ENCODE measurements at regions of chr18 and their contacts with region 1.

Region 1: DNA sequence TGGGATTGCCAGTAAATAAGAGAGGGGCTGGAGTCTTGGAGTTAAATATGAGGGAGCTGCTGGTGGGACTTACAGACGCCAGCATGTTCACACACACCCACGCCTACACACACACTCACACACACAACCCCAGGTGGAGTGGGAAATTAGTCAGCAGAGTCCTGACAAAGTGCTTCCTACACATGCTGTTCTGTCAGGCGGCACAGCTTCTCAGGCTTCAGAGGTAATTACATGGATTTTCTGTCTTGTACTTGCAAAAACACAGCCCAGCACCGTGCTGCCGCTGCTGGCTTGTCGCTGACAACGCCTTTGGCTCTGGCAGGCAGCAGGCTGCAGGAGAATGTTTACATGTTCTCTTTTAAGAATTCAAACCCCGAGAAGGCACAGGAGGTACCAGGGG is 1186.3 kb upstream of the CELF4 start:
- DNase-seq: no peak
- ATAC-seq: no peak
- H3K4me3 ChIP-seq: no peak overlapping the region
- H3K27ac ChIP-seq: no peak overlapping the region
- H3K4me1 ChIP-seq: no peaks in the 10 kb centered on the region
- H3K27me3 ChIP-seq: no peaks in the 10 kb centered on the region
- CTCF ChIP-seq: no peak
- EP300 ChIP-seq: no peak
- POLR2A ChIP-seq: no peak
- RAD21 ChIP-seq: no peak

Region 2: GRCh38 chr18:38534073-38534472 is 217.8 kb before region 1 on chr18:
- CTCF ChIA-PET with region 1: no interaction called
- POLR2A ChIA-PET with region 1: no interaction called
- in situ Hi-C with region 1: no loop called
- intact Hi-C with region 1: no loop called
- DNase-seq: no peak
- ATAC-seq: no peak
- H3K4me3 ChIP-seq: no peak overlapping the region
- H3K27ac ChIP-seq: no peak overlapping the region
- H3K4me1 ChIP-seq: no peaks in the 10 kb centered on the region
- H3K27me3 ChIP-seq: no peaks in the 10 kb centered on the region
- CTCF ChIP-seq: no peak
- EP300 ChIP-seq: no peak
- POLR2A ChIP-seq: no peak
- RAD21 ChIP-seq: no peak

Region 3: GRCh38 chr18:38790303-38790702 is 38.4 kb after region 1 on chr18:
- CTCF ChIA-PET with region 1: no interaction called
- POLR2A ChIA-PET with region 1: no interaction called
- in situ Hi-C with region 1: no loop called
- intact Hi-C with region 1: loop called (anchors 1 kb)
- DNase-seq: peak in 1 of 4 experiments; percentile 2
- ATAC-seq: no peak
- H3K4me3 ChIP-seq: no peak overlapping the region
- H3K27ac ChIP-seq: no peak overlapping the region
- H3K4me1 ChIP-seq: no peaks in the 10 kb centered on the region
- H3K27me3 ChIP-seq: no peaks in the 10 kb centered on the region
- CTCF ChIP-seq: no peak
- EP300 ChIP-seq: no peak
- POLR2A ChIP-seq: no peak
- RAD21 ChIP-seq: no peak

Measured in K562 (cell line).